Activated CD8-positive, alpha-beta T cell treated with anti-CD3 and anti-CD28 coated beads for 36 hours (primary cell): ENCODE measurements at regions of chr15 and their contacts with region 1.

Region 1: GRCh38 chr15:81170511-81170910 is 26.2 kb upstream of the IL16 start:
- DNase-seq: no peak
- ATAC-seq: no peak
- H3K4me3 Mint-ChIP-seq: no peak overlapping the region
- H3K27ac Mint-ChIP-seq: no peak overlapping the region
- H3K4me1 Mint-ChIP-seq: peaks cover 2% of the 10 kb centered on the region
- H3K27me3 Mint-ChIP-seq: peaks cover 14% of the 10 kb centered on the region
- CTCF ChIP-seq: no peak

Region 2: DNA sequence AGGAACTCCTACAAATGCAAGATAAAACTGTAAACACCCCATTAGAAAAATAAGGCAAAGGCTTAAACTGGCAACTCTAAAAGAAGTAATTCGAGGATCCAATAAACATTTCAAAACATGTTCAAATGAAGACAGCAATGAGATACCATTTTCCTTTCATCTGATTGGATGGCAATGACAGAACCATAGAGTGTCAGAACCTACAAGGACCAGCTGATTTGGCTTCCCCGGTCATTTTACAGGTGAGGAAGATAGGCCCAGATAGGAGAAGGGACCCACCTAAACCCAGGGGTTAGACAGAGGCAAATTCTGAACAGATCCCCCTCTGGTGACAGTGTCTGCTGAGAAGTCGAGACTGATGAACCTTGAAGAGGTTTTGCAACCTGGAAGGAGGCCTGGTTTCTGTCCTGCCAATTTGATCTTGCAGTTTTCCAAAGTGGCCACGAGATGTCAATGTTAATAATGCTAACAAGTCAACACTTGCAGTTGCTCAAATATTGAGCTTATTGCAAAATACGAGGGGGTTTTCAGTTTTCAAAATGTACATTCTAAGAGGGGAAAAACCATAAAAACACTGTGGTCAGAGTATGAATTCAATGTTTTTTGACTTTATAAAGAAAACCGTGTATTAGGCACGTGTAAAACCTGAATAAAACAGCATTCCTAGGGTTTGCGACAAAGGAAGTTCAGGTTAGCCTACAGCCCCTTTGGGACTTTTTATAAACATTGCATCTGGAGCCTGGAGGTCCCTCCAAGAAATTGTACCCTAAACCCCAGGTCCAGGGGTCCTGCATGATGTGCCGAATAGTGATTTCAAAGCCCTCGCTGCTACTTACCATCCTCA is 14.9 kb before region 1 on chr15:
- CTCF ChIA-PET with region 1: interaction called, 10 read pairs
- POLR2A ChIA-PET with region 1: interaction called, 4 read pairs
- intact Hi-C with region 1: no loop called
- DNase-seq: peak; percentile 22
- ATAC-seq: peak; percentile 61
- H3K4me3 Mint-ChIP-seq: no peak overlapping the region
- H3K27ac Mint-ChIP-seq: no peak overlapping the region
- H3K4me1 Mint-ChIP-seq: peaks cover 2% of the 10 kb centered on the region
- H3K27me3 Mint-ChIP-seq: no peaks in the 10 kb centered on the region
- CTCF ChIP-seq: peak; percentile 64

Region 3: DNA sequence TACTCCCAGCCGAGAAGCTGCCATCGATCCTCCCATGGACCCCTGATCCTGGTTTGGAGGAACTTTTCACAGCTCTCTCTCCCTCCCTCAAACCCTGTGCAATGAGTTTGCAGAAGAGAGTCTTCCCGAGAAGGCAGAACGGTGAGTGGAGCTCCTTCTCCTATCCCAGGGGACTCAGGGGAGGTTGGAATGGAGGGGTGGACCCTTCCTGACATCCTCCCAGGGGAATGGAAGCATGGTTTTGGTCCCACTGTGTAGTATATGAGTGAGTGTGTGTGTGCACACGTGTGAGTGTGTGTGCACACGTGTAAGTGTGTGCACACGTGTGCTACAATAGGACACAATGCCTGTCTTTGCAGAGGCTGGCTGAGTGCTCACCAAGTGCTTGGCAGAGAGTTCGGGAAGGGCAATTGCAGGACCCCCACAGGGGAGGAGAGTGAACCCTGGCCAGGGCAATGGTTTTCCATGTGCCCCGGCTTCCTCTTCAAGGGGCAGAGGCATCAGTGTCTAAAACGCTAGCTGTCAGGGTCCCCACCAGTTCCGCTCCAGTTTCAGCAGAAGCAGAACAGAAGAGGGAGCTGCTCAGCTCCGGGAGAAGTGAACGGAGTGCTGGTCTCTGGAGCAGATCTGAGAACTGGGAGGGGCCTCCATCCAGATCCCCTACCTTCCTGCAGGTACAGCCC is 12.4 kb after region 1 on chr15:
- CTCF ChIA-PET with region 1: no interaction called
- POLR2A ChIA-PET with region 1: no interaction called
- intact Hi-C with region 1: no loop called
- DNase-seq: no peak
- ATAC-seq: no peak
- H3K4me3 Mint-ChIP-seq: no peak overlapping the region
- H3K27ac Mint-ChIP-seq: no peak overlapping the region
- H3K4me1 Mint-ChIP-seq: peaks cover 4% of the 10 kb centered on the region
- H3K27me3 Mint-ChIP-seq: peaks cover 30% of the 10 kb centered on the region
- CTCF ChIP-seq: no peak